Gastrocnemius medialis (tissue), 4 donors: ENCODE measurements at regions of chr17 and their contacts with region 1.

Region 1: DNA sequence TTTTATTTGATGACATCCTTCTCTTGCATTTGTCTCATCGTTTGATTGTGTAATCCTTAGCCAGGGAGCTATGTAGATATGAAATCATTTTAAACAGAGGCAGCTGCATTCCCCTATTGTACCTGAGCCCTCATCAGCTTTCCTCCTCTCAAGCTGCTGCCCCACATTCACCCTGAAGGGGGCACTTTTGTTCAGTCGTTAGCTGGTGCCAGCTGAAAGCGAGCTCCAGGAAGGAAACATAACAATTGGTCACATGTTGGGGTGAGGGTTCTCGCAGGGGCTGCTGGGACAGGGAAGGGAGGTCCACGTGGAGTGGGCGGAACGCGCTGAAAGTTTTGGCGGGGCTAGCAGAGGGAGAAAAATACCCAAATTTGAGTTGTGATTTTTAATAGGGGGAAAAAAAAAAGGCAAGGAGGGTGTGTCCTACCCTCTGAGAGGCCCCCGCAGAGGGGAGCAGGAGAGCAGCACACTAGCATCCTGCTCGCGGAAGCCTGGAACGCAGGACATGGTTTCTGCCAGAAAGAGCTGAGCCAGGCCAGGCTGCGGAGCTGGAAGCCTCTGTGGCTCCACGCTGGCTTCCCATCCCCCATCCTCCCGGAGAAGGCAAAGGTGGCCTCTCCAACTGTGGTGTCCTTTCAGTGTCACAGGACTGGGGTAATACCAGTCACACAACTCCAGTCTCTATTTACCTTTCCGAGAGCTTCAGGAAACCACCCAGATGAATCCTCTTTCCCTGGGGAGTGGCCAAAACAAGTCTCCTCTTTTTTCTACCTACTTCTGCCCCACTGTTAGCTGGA is 8.5 kb upstream of the MSL1 start:
- DNase-seq: peak; percentile 95 to 96
- ATAC-seq: peak; percentile 65 to 76
- H3K4me3 ChIP-seq: peak overlapping the region; percentile 51 to 61 (median 58)
- H3K27ac ChIP-seq: peak overlapping the region; percentile 93 to 100 (median 96)
- H3K4me1 ChIP-seq: peaks cover 58 to 65% of the 10 kb centered on the region in 2 donors
- H3K27me3 ChIP-seq: no peaks in the 10 kb centered on the region
- CTCF ChIP-seq: peak; percentile 83 to 94 (median 92)
- POLR2A ChIP-seq: peak; percentile 37 to 62

Region 2: GRCh38 chr17:39754161-39754951 is 359.0 kb before region 1 on chr17:
- in situ Hi-C with region 1: no loop called
- intact Hi-C with region 1: no loop called
- DNase-seq: peak; percentile 67 to 85
- ATAC-seq: peak; percentile 92 to 95
- H3K4me3 ChIP-seq: peak overlapping the region; percentile 62 to 85 (median 76)
- H3K27ac ChIP-seq: peak overlapping the region; percentile 76 to 86 (median 83)
- H3K4me1 ChIP-seq: peaks cover 0 to 5% of the 10 kb centered on the region in 2 donors
- H3K27me3 ChIP-seq: no peaks in the 10 kb centered on the region
- CTCF ChIP-seq: peak; percentile 85 to 100 (median 98)
- POLR2A ChIP-seq: peak; percentile 51 to 67

Region 3: DNA sequence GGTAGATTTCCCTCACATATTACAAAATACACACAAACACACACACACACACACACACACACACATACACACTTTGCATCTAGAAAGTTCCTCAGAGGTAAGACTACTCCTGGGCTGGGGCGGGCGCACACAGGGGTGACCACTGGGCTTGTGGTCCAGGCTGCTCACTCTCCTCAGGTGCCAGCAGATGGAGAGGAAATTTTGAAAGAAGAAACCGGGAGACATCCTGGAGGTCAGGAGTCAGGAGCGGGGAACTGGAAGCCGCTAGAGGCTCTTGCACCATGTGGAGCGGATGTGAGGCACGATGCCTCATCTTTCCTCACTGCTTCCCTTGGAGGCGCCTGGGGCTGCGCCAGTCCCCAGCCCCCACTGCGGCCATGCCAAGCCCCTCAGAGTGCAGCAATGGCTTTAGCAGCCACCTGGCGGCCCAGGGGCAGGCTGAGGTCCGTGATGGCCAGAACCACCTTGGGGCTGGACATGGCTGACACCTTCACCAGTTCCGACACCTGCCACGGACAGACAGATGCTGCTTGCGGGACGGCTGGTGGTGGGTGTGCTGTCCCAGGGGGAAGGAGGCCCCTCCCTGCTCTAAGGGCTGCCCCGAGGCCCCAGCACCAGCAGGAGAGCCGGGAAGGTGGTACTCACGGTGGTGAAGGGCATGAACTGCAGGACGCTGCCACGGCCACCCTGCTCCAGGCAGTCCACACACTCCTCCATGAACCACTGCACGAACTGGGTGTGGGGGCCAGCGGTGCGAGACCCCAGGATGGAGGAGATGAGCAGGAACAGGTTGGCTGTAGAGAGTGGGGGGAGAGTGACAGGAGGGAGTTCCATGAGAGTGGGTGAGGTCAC is 93.9 kb before region 1 on chr17:
- in situ Hi-C with region 1: no loop called
- intact Hi-C with region 1: loop called (anchors 1 kb)
- DNase-seq: peak; percentile 84 to 94
- ATAC-seq: peak; percentile 44 to 45
- H3K4me3 ChIP-seq: peak overlapping the region in 2 of 4 donors; percentile 54 to 64
- H3K27ac ChIP-seq: peak overlapping the region; percentile 87 to 99 (median 94)
- H3K4me1 ChIP-seq: peaks cover 78 to 85% of the 10 kb centered on the region in 2 donors
- H3K27me3 ChIP-seq: no peaks in the 10 kb centered on the region
- CTCF ChIP-seq: peak in 4 of 5 experiments; percentile 25 to 39 (median 35)
- POLR2A ChIP-seq: peak; percentile 60 to 67

Region 4: DNA sequence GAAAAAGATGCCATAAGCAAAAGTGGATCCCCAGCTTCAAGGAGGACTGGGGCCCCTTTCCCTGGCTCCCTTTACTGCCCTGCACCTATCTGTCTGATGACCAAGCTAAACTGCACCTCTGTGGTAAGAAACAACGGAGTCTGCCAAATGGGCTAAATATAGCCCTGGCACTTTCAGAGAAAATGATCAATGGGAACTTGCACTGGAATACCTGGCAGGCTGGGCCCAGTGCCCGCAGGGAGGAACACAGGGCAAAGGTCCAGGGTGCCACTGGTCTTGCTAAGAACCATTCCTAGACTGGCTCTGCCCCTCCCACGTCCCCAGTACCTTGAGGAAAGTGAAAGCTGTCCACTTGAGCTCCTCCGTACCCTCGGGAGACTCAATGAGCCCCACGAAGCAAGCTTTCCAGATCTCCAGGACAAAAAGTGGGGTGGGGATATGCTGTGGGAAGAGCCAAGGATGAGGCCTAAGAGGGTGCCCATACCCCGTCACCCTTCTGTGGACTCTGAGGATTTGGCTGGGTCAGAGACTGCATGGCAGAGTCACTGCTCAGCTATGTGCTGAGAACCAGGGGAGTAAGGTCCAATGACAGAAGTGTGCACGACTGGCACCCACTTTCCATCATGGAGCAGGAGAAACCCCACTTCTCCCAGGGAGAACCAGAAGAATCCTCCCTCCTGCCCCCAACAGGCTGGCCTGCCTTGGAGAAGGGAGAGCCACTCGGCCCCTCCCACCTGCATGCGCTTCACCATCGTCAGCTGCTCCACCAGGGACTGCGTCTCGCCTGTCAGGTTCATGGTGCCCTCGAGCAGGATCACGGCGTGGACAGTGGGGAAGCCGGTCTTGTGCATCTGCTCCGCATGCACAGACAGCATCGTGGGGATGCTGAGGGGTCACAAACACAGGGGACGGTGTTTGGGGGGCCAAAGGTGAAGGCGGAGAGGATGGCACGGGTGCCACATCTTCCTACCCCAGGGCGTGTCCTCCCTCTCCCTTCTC is 80.7 kb before region 1 on chr17:
- in situ Hi-C with region 1: no loop called
- intact Hi-C with region 1: no loop called
- DNase-seq: peak; percentile 68 to 85
- ATAC-seq: peak; percentile 88 to 93
- H3K4me3 ChIP-seq: peak overlapping the region in 2 of 4 donors; percentile 19 to 27
- H3K27ac ChIP-seq: peak overlapping the region; percentile 84 to 91 (median 86)
- H3K4me1 ChIP-seq: peaks cover 19 to 35% of the 10 kb centered on the region in 2 donors
- H3K27me3 ChIP-seq: no peaks in the 10 kb centered on the region
- CTCF ChIP-seq: no peak
- POLR2A ChIP-seq: peak in 1 of 2 donors; percentile 19

Region 5: DNA sequence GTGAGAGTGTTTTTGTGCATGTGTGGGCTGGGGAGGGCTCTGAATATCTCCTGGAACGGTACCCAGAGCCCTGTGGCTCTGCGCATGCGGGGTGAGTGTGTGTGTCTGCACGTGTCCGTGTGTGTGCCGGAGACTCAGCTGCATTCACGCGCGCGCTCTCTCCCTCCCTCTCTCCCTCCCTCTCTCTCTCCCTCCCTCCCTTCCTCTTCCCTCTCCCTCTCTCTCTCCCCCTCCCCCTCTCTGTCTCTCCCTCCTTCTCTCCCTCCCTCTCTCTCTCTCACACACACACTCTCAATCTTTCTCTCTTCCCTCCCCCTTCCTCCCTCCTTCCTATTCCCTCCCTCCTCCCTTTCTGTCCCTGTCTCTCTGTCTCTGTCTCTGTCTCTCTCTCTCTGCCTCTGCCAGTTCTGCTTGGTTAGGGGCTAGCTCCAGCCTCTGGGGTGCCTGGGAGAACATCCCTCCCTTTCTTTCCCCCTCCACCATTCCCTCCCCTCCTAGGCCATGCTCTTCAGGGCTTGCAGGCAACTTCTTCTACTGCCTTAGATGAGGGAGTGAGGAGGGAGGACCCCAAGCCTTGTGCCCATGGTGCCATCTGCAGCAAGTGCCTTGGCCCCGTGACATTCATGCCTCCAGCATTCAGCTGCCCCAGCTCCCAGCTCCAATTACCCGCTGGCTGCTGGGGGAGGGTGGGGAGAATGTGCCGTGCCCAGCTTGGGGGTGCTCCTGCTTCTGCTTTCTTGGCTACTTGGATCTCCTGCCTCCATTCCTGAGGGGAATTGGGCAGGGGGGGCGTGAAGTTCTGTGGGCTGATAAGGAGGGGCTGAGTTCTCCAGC is 44.2 kb before region 1 on chr17:
- in situ Hi-C with region 1: loop called in 2 of 4 experiments (anchors 5 kb)
- intact Hi-C with region 1: loop called (anchors 1 kb)
- DNase-seq: peak; percentile 96
- ATAC-seq: peak; percentile 46 to 48
- H3K4me3 ChIP-seq: peak overlapping the region; percentile 46 to 61 (median 52)
- H3K27ac ChIP-seq: peak overlapping the region; percentile 100
- H3K4me1 ChIP-seq: peaks cover 91 to 98% of the 10 kb centered on the region in 2 donors
- H3K27me3 ChIP-seq: no peaks in the 10 kb centered on the region
- CTCF ChIP-seq: no peak
- POLR2A ChIP-seq: peak; percentile 72 to 75

Region 6: DNA sequence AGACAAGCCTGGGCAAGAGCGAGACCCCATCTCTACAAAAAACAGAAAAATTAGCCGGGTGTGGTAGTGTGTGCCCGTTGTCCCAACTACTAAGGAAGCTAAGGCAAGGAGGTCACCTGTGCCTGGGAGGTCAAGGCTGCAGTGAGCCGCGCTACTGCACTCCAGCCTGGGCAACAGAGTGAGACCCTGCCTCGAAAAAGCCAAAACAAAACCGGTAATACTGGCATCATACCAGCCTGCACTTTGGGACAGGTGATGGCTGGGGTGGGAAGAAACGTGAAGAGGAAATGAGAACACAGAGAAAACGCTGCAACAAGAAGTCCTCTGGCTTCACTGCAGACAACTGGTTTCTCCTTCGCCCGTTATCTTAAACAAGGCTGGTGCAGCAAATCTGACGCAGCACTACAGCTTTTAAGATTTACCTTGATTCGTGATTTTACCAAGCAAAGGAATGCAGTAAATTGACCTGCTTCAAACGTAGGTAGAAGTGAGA is 26.3 kb after region 1 on chr17:
- in situ Hi-C with region 1: no loop called
- intact Hi-C with region 1: loop called (anchors 1 kb)
- DNase-seq: peak in 1 of 2 donors; percentile 35
- ATAC-seq: peak; percentile 17 to 34
- H3K4me3 ChIP-seq: peak overlapping the region; percentile 72 to 87 (median 77)
- H3K27ac ChIP-seq: peak overlapping the region; percentile 91 to 100 (median 96)
- H3K4me1 ChIP-seq: peaks cover 34% of the 10 kb centered on the region in 2 donors
- H3K27me3 ChIP-seq: no peaks in the 10 kb centered on the region
- CTCF ChIP-seq: peak in 1 of 5 experiments; percentile 18
- POLR2A ChIP-seq: no peak

Region 7: GRCh38 chr17:40287494-40288369 is 174.4 kb after region 1 on chr17 and contains the start of gene CDC6:
- in situ Hi-C with region 1: no loop called
- intact Hi-C with region 1: loop called (anchors 5 kb)
- DNase-seq: peak; percentile 98 to 99
- ATAC-seq: peak; percentile 100
- H3K4me3 ChIP-seq: peak within 1 kb of the TSS; percentile 50 to 71 (median 64)
- H3K27ac ChIP-seq: peak within 1 kb of the TSS; percentile 22 to 61 (median 40)
- H3K4me1 ChIP-seq: peaks cover 13 to 17% of the 10 kb centered on the region in 2 donors
- H3K27me3 ChIP-seq: no peaks in the 10 kb centered on the region
- CTCF ChIP-seq: no peak
- POLR2A ChIP-seq: no peak
- total RNA-seq, gene CDC6: 0.27 to 0.75 (median 0.66) TPM in 3 of 4 donors, not detected in the other